GM23248 (cell line): ENCODE measurements at regions of chr7 and their contacts with region 1.

Region 1: DNA sequence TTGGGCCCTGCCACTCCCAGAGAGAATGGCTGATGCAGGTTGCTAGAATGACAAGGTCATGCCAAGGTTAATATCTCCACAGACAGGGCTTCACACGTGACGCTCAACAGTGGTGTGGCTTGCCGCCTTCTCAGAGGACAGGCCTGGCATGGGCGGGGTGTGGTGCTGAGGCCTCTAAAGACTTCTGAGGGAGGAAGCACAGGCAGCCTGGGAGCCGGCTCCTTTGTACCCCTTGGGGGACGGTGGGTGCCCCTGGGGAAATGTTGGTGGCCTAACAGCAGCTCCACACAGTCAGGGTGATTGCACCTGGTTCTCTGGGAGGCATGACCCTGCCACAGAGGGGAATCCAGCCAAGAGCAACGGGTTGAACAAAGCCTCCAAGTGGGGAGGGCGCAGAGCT is 115.1 kb downstream of the PKD1L1 start:
- DNase-seq: no peak
- H3K4me3 ChIP-seq: no peak overlapping the region
- H3K27ac ChIP-seq: no peak overlapping the region
- H3K4me1 ChIP-seq: no peaks in the 10 kb centered on the region
- H3K27me3 ChIP-seq: no peaks in the 10 kb centered on the region; the same call in 1 of the 2 replicates

Region 2: GRCh38 chr7:47273974-47274766 is 559.0 kb before region 1 on chr7:
- in situ Hi-C with region 1: loop called (anchors 10 kb)
- DNase-seq: no peak
- H3K4me3 ChIP-seq: no peak overlapping the region
- H3K27ac ChIP-seq: no peak overlapping the region
- H3K4me1 ChIP-seq: no peaks in the 10 kb centered on the region
- H3K27me3 ChIP-seq: no peaks in the 10 kb centered on the region

Region 3: DNA sequence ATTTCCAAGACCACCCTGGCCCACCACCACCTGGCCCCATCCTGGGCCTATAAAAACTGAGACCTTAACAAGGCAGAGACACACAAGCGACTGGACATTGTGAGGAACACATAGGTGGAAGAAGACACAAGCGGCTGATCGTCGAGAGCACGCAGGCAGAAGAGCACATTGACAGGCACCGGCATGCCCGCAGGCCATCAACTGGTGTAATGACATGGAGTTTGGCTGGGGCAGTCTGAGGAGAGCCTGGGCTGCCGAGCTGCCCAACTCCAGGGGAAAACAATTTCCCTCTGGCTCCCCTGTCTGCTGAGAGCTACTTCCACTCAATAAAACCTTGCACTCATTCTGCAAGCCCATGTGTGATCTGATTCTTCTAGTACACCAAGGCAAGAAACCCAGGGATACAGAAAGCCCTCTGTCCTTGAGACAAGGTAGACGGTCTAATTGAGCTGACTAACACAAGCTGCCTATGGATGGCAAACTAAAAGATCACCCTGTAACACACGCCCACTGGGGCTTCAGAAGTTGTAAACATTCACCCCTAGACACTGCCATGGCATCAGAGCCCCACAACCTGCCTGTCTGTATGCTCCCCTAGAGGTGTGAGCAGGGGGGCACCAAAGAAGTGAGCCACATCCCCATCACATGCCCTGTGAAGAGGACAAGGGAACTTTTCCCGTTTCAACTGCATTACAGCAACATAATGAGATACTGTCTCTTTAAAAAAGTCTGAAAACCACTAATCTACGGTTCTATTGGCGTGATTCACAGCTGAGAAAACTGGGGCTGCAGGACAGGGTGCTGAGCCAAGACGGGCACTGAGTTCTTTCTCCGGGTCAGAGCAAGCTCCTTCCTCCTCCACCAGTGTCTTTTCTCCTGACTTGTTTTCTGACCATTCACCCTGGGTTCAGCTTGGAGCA is 232.8 kb before region 1 on chr7:
- in situ Hi-C with region 1: no loop called
- DNase-seq: peak; percentile 90
- H3K4me3 ChIP-seq: peak overlapping the region; percentile 61
- H3K27ac ChIP-seq: peak overlapping the region; percentile 90
- H3K4me1 ChIP-seq: peaks cover 47% of the 10 kb centered on the region
- H3K27me3 ChIP-seq: no peaks in the 10 kb centered on the region

Region 4: GRCh38 chr7:47968847-47969774 is 135.9 kb after region 1 on chr7:
- in situ Hi-C with region 1: no loop called
- DNase-seq: peak; percentile 62
- H3K4me3 ChIP-seq: no peak overlapping the region
- H3K27ac ChIP-seq: no peak overlapping the region
- H3K4me1 ChIP-seq: no peaks in the 10 kb centered on the region; the same call in 1 of the 2 replicates
- H3K27me3 ChIP-seq: no peaks in the 10 kb centered on the region